ENCODE measurements at regions of chr19 and their contacts with region 1.

Region 1: DNA sequence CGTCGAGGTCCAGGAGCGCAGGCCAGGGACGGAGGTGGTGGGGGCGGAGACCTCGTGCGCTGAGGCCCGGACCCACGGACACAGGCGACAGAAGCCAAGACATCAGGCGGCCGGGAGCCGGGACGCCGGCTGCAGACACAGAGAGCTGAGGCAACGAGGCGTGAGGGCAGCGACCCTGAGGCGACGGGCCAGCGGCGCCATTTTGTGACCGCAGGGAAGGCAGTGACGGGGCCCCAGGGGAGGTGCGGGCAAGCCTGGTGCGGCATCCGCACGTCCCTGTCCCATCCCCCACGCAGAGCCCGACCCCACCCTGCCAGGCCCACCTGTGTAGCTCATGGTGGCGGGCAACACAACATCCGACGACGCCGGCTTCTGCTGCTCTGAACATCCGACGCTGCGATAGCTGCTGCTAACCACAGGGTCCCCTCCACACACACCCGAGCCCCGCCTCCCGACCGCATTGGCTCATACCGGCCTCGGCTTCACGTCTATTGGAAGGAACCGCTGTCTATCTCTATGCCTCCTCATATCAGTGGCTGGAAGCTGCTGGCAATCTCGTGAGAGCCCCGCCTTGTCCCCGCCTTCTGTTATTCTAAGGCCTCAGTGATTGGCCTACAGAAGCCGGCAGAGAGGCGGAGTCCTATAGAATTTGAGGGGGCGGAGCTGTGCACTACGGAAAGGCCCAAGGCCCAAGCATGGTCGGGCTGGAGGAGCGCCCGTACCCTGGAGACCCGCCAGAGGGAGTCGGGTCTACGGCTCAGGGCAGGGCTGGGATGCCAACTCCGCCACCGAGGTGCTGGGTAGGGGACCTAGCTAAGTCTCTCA is at the start of gene AKAP8L:
- DNase-seq: peak; percentile 99
- H3K4me3 Mint-ChIP-seq: peak within 1 kb of the TSS; percentile 97
- H3K27ac Mint-ChIP-seq: peak within 1 kb of the TSS; percentile 97
- H3K4me1 Mint-ChIP-seq: peaks cover 42% of the 10 kb centered on the region
- H3K27me3 Mint-ChIP-seq: no peaks in the 10 kb centered on the region
- total RNA-seq, gene AKAP8L: 96.3 to 98.2 TPM

Region 2: DNA sequence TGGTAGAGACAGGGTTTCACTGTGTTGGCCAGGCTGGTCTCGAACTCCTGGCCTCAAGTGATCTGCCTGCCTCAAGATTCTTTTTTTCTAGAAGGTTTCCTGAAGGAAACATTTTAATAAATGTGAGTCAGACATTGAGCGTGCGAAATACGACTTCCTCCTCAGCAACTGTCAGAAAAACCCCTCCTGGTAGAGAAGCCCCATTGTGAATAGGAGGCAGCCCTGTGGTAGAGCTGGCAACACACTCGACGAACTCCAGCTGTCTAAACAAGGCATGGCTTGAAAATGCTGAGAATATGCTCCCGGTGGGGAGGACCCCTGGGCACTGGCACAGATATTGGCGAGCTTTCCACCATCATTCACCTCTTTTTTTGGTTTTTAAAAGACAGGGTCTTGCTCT is 719.2 kb before region 1 on chr19:
- CTCF ChIA-PET with region 1: no interaction called
- POLR2A ChIA-PET with region 1: no interaction called
- DNase-seq: no peak
- H3K4me3 Mint-ChIP-seq: no peak overlapping the region
- H3K27ac Mint-ChIP-seq: no peak overlapping the region
- H3K4me1 Mint-ChIP-seq: no peaks in the 10 kb centered on the region
- H3K27me3 Mint-ChIP-seq: no peaks in the 10 kb centered on the region

Region 3: GRCh38 chr19:15379083-15379995 is 39.5 kb before region 1 on chr19 and contains the start of gene AKAP8:
- CTCF ChIA-PET with region 1: interaction called, 49 read pairs
- POLR2A ChIA-PET with region 1: interaction called, 108 read pairs
- DNase-seq: peak; percentile 98
- H3K4me3 Mint-ChIP-seq: peak within 1 kb of the TSS; percentile 87
- H3K27ac Mint-ChIP-seq: peak within 1 kb of the TSS; percentile 99
- H3K4me1 Mint-ChIP-seq: peaks cover 36% of the 10 kb centered on the region
- H3K27me3 Mint-ChIP-seq: no peaks in the 10 kb centered on the region
- total RNA-seq, gene AKAP8: 43.8 to 45.9 TPM

Region 4: DNA sequence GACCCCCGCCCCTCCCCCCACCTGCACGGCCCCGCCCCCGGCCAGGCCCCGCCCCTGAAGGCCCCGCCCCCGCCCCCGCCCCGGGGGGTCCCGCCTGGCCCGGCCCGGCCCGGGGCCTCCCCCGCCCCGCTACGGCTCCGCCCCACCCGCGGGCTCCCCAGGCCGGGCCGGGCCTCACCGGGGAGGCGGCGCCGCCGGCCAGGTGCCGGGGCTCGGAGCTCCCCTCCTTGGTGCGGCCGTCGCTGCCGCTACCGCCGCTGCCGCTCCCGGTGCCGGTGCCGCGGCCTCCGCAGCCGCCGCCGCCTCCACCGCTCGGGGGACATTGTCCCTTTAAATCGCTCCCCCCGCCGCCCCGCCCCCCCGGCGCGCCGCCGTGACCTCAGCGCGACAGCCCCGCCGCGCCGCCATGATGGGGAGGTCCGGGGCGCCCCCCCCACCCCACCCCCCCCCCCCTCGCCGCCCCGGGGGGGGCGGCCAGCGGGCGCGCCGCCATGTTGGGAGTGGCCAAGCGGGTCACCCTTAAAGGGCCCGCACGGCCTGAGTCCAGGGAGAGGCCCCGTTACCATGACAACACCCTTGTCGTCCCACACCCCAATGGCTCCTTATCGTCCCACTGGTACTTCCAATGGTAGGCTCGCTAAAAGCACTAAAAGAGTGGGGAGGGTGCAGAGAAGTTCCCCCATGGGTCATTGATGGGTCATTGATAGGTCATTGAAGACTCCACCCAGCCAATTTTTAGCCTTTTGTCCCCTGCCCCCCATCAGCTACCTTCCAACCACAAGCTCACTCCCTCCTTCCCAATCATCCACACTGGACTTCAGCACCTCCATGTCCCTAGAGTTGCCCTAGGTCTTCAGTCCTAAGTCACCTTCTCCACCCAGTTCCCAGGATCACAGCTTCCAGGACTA is 31.1 kb after region 1 on chr19 and contains the start of gene WIZ:
- CTCF ChIA-PET with region 1: interaction called, 17 read pairs
- POLR2A ChIA-PET with region 1: interaction called, 17 read pairs
- DNase-seq: peak; percentile 84
- H3K4me3 Mint-ChIP-seq: peak within 1 kb of the TSS; percentile 70
- H3K27ac Mint-ChIP-seq: peak within 1 kb of the TSS; percentile 81
- H3K4me1 Mint-ChIP-seq: peaks cover 29% of the 10 kb centered on the region
- H3K27me3 Mint-ChIP-seq: no peaks in the 10 kb centered on the region
- total RNA-seq, gene WIZ: 25.3 to 25.4 TPM

Region 5: GRCh38 chr19:15466851-15467733 is 48.3 kb after region 1 on chr19:
- CTCF ChIA-PET with region 1: interaction called, 24 read pairs
- POLR2A ChIA-PET with region 1: interaction called, 92 read pairs
- DNase-seq: peak; percentile 83
- H3K4me3 Mint-ChIP-seq: peak overlapping the region; percentile 66
- H3K27ac Mint-ChIP-seq: peak overlapping the region; percentile 98
- H3K4me1 Mint-ChIP-seq: peaks cover 64% of the 10 kb centered on the region
- H3K27me3 Mint-ChIP-seq: peaks cover 8% of the 10 kb centered on the region

Region 6: GRCh38 chr19:15563325-15563794 is 144.6 kb after region 1 on chr19:
- CTCF ChIA-PET with region 1: interaction called, 30 read pairs
- POLR2A ChIA-PET with region 1: interaction called, 4 read pairs
- DNase-seq: no peak
- H3K4me3 Mint-ChIP-seq: no peak overlapping the region
- H3K27ac Mint-ChIP-seq: no peak overlapping the region
- H3K4me1 Mint-ChIP-seq: no peaks in the 10 kb centered on the region
- H3K27me3 Mint-ChIP-seq: peaks cover 19% of the 10 kb centered on the region

Measured in activated CD4-positive, alpha-beta memory T cell treated with anti-CD3 and anti-CD28 coated beads, Interleukin-2, amount 10 ng/mL, durations not matched to agents 7 days and 5 days (primary cell).